ENCODE measurements at regions of chr1 and their contacts with region 1.

Region 1: DNA sequence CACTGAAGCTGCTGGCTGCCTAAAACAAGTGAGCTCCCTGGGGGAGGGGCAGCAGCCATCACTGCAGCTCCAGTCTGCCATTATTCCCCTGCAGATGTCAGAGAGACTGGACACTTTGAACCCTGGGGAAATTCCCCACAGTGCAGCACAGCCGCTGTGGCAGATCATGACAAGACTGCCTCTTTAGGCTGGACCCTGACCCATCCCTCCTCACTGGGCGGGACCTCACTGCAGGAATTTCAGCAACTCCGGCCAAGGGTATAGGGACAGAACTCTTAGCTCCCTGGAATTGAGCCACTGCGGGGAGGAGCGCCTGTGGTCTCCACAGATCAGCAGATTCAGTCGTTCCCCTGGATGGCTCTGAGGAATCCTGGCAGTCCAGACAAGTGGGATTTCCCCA is 964.6 kb downstream of the BRINP3 start:
- DNase-seq: no peak
- ATAC-seq: no peak

Region 2: GRCh38 chr1:189438808-189439207 is 74.3 kb before region 1 on chr1:
- intact Hi-C with region 1: loop called (anchors 2 kb)
- DNase-seq: no peak
- ATAC-seq: no peak

Region 3: GRCh38 chr1:190129366-190129765 is 616.3 kb after region 1 on chr1:
- intact Hi-C with region 1: loop called (anchors 5 kb)
- DNase-seq: no peak
- ATAC-seq: no peak

Measured in sciatic nerve (tissue), 2 donors.